Natural killer cell (primary cell): ENCODE measurements at regions of chr14 and their contacts with region 1.

Region 1: DNA sequence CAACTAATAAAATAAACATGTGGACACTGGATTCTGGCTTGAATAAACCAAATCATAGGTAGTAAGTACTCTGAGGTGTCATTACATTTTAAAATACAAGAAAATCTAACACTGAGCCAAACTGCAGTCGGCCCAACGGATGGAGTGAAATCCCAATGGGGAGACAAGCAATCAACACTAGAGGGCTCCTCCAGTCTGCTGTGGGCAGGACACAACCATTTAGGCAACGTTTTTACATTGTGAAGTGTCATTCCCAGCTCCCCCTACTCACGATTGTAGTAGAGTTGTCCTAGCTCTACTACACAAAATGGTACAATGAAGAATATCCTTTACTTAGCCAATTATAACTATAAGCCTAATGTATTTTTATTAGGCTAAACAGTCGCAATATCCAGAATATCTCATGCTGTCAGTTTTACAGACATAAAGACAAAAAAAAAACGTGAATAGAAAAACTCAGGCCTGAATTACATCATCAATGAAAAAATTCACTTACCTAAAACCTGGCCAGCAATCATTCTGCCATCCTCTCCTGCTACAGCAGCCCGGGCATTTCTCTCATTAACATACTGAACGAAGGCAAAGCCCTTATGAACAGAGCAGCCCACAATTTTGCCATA is 35.7 kb downstream of the HNRNPC start:
- DNase-seq: peak in 1 of 2 donors; percentile 60
- ATAC-seq: no peak
- H3K4me3 ChIP-seq: no peak overlapping the region
- H3K4me3 Mint-ChIP-seq: no peak overlapping the region
- H3K27ac ChIP-seq: no peak overlapping the region
- H3K27ac Mint-ChIP-seq: peak overlapping the region; percentile 90 to 94
- H3K4me1 ChIP-seq: peaks cover 37% of the 10 kb centered on the region
- H3K4me1 Mint-ChIP-seq: peaks cover 73 to 81% of the 10 kb centered on the region in 2 donors
- H3K27me3 ChIP-seq: no peaks in the 10 kb centered on the region
- H3K27me3 Mint-ChIP-seq: no peaks in the 10 kb centered on the region
- CTCF ChIP-seq: no peak

Region 2: GRCh38 chr14:21203470-21204166 is 29.9 kb before region 1 on chr14:
- intact Hi-C with region 1: no loop called
- DNase-seq: peak in 1 of 2 donors; percentile 21
- ATAC-seq: peak in 1 of 3 donors; percentile 10
- H3K4me3 ChIP-seq: no peak overlapping the region
- H3K4me3 Mint-ChIP-seq: no peak overlapping the region
- H3K27ac ChIP-seq: no peak overlapping the region
- H3K27ac Mint-ChIP-seq: peak overlapping the region; percentile 23 to 61
- H3K4me1 ChIP-seq: no peaks in the 10 kb centered on the region
- H3K4me1 Mint-ChIP-seq: peaks cover 42 to 54% of the 10 kb centered on the region in 2 donors
- H3K27me3 ChIP-seq: no peaks in the 10 kb centered on the region
- H3K27me3 Mint-ChIP-seq: no peaks in the 10 kb centered on the region
- CTCF ChIP-seq: no peak

Region 3: DNA sequence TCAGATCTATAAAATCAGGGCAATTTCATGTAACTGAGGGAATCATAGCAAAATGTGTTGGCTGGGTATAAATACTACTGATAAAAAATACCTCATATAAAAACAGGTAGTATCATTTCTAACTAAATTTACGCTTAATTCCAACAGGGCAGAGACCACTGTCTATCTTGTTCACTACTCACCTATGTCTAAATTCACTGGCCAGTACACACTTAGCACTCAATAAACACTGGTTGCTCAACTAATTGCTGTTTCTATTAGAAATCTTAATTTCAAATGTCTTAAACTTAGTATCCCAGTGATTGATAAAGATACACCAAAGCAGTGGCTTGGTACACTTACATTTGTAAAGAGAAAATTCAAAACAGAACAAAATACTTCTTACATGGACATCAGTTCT is 19.9 kb before region 1 on chr14:
- intact Hi-C with region 1: no loop called
- DNase-seq: no peak
- ATAC-seq: no peak
- H3K4me3 ChIP-seq: no peak overlapping the region
- H3K4me3 Mint-ChIP-seq: peak overlapping the region; percentile 5
- H3K27ac ChIP-seq: no peak overlapping the region
- H3K27ac Mint-ChIP-seq: peak overlapping the region; percentile 90 to 93
- H3K4me1 ChIP-seq: peaks cover 22% of the 10 kb centered on the region
- H3K4me1 Mint-ChIP-seq: peaks cover 44 to 45% of the 10 kb centered on the region in 2 donors
- H3K27me3 ChIP-seq: no peaks in the 10 kb centered on the region
- H3K27me3 Mint-ChIP-seq: no peaks in the 10 kb centered on the region
- CTCF ChIP-seq: no peak

Region 4: DNA sequence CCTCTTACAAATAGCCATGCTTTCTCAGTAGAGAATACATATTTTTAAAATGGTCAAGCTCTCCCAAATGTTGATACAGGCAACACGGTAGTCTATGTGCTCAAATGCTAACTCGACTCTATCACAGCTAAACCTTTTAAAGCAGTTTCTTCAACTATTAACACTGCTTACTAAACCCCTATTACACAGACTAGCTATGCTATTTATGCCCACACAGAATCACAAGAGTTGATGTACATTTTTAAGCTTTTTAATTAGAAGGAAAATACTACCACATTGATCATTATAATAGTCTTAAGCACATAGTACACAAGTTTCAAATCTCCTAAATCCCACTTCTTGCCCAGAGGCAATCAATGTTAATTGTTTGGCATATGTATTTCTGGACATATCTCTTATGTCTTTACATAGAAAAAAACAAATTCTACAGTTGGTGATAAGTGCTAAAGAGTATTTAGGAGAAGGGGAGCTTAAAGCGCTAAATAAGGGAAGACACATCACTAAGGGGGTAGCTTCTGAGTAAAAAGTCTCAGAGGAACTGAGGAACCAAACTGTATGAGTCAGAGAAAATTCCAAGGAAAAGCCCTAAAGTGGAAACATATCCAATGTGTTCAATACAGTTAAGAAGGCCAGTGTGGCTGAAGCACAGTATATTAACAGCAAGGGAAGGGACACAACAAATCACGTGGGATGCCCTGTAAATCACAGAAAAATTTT is 22.0 kb after region 1 on chr14:
- intact Hi-C with region 1: no loop called
- DNase-seq: no peak
- ATAC-seq: no peak
- H3K4me3 ChIP-seq: no peak overlapping the region
- H3K4me3 Mint-ChIP-seq: peak overlapping the region; percentile 70
- H3K27ac ChIP-seq: no peak overlapping the region
- H3K27ac Mint-ChIP-seq: peak overlapping the region; percentile 64 to 70
- H3K4me1 ChIP-seq: peaks cover 51% of the 10 kb centered on the region
- H3K4me1 Mint-ChIP-seq: peaks cover 62 to 78% of the 10 kb centered on the region in 2 donors
- H3K27me3 ChIP-seq: no peaks in the 10 kb centered on the region
- H3K27me3 Mint-ChIP-seq: no peaks in the 10 kb centered on the region
- CTCF ChIP-seq: no peak

Region 5: DNA sequence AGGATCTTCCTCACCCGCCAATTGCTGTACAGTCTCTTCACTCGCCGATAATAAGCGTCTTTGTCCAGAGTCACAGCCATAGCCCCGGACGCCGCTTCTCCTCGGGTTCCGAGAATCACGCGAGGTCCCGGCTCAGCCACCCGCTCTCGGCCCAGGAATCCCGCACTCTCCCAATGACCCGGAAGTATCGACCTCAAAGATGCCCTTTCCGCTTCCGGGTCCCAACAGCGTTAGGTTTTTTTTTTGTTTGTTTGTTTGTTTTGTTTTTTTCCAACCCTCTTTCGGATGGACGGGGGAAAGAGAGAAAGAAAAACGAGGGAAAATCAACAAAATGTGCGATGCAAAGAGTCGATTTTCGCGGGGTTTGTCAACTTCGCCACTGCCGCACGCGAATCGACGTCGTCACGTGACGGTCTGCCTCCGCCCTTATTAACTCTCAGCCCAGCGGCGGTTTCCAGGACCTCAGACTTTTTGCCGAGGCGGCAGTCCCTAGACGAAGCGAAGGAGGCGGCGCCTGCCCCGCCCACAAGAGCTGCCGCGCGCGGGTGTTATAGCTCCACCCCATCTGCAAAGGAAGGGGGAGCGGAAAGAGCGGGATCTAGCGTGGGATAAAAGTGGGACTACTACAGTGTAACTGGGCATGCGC is 150.4 kb after region 1 on chr14 and contains the start of gene SUPT16H:
- intact Hi-C with region 1: loop called (anchors 5 kb)
- DNase-seq: peak; percentile 89 to 96
- ATAC-seq: peak; percentile 89 to 98 (median 93)
- H3K4me3 ChIP-seq: peak within 1 kb of the TSS; percentile 96
- H3K4me3 Mint-ChIP-seq: peak within 1 kb of the TSS; percentile 98
- H3K27ac ChIP-seq: peak within 1 kb of the TSS; percentile 93
- H3K27ac Mint-ChIP-seq: peak within 1 kb of the TSS; percentile 96 to 99
- H3K4me1 ChIP-seq: peaks cover 17% of the 10 kb centered on the region
- H3K4me1 Mint-ChIP-seq: peaks cover 33% of the 10 kb centered on the region in 2 donors
- H3K27me3 ChIP-seq: no peaks in the 10 kb centered on the region
- H3K27me3 Mint-ChIP-seq: no peaks in the 10 kb centered on the region
- CTCF ChIP-seq: no peak
- total RNA-seq, gene SUPT16H: 60.3 to 72.6 (median 65.1) TPM